ENCODE measurements at regions of chr15 and their contacts with region 1.

Region 1: GRCh38 chr15:50883903-50884302 is 24.6 kb upstream of the AP4E1 start:
- DNase-seq: peak; percentile 52
- H3K4me3 Mint-ChIP-seq: no peak overlapping the region
- H3K27ac Mint-ChIP-seq: peak overlapping the region; percentile 91
- H3K4me1 Mint-ChIP-seq: peaks cover 72% of the 10 kb centered on the region
- H3K27me3 Mint-ChIP-seq: no peaks in the 10 kb centered on the region

Region 2: DNA sequence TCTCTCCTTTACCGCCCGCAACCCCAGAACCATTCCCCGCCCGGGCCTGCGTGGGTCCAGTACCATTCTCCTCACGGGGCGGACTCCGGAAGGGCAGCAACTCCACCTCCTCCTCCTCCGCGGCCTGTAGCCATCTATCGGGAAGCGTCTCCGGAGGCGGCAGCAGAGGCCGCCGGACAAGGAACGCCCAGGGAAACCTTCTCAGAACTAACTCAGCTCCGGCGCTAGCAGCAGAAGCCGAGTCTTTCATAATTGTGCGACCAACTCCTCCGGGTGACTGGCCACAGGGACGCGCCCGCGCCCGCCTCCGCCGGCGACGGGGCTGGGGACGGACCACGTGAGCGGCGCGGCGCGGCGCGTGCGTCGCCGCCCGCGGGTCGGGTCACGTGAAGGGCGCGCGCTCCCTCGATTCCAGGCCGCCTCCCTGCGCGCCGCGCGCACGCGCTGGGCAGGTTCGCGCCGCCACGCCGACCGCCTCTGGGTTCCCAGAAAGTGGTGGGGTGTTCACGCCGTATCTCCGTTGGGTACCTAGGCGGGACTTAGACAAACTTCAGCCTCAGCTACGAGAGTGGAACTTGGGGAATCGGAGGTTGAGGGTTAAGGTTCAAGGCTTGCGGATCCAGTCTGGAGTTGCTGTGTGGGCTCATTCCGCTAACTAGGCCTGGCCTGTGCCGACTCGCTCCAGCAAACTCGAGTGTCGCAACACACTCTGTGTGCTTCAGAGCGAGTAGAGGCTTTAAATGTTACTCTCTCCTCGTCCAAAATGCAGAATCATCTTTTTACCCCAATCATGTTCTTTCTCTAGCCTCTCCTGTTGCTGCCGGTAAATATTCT is 197.2 kb before region 1 on chr15 and contains the start of gene TRPM7:
- CTCF ChIA-PET with region 1: interaction called, 4 read pairs
- POLR2A ChIA-PET with region 1: interaction called, 10 read pairs
- DNase-seq: peak; percentile 90
- H3K4me3 Mint-ChIP-seq: peak within 1 kb of the TSS; percentile 99
- H3K27ac Mint-ChIP-seq: peak within 1 kb of the TSS; percentile 97
- H3K4me1 Mint-ChIP-seq: peaks cover 57% of the 10 kb centered on the region
- H3K27me3 Mint-ChIP-seq: no peaks in the 10 kb centered on the region
- total RNA-seq, gene TRPM7: 35.3 to 40.2 TPM

Region 3: GRCh38 chr15:50979041-50979440 is 95.1 kb after region 1 on chr15:
- CTCF ChIA-PET with region 1: no interaction called
- POLR2A ChIA-PET with region 1: no interaction called
- DNase-seq: no peak
- H3K4me3 Mint-ChIP-seq: no peak overlapping the region
- H3K27ac Mint-ChIP-seq: no peak overlapping the region
- H3K4me1 Mint-ChIP-seq: peaks cover 5% of the 10 kb centered on the region
- H3K27me3 Mint-ChIP-seq: no peaks in the 10 kb centered on the region

Region 4: GRCh38 chr15:51299187-51300066 is 415.5 kb after region 1 on chr15:
- CTCF ChIA-PET with region 1: no interaction called
- POLR2A ChIA-PET with region 1: no interaction called
- DNase-seq: no peak
- H3K4me3 Mint-ChIP-seq: no peak overlapping the region
- H3K27ac Mint-ChIP-seq: no peak overlapping the region
- H3K4me1 Mint-ChIP-seq: no peaks in the 10 kb centered on the region
- H3K27me3 Mint-ChIP-seq: peaks cover 21% of the 10 kb centered on the region